A549 (cell line): ENCODE measurements at regions of chr17 and their contacts with region 1.

Region 1: GRCh38 chr17:4420692-4421131 is 13.0 kb upstream of the SPNS3 start:
- DNase-seq: peak; percentile 85 to 90
- ATAC-seq: peak; percentile 93 to 95
- H3K4me3 ChIP-seq: no peak overlapping the region
- H3K27ac ChIP-seq: no peak overlapping the region
- H3K4me1 ChIP-seq: no peaks in the 10 kb centered on the region
- CTCF ChIP-seq: peak; percentile 90
- EP300 ChIP-seq: no peak
- POLR2A ChIP-seq: no peak
- RAD21 ChIP-seq: peak; percentile 85 to 93

Region 2: GRCh38 chr17:4444782-4445473 is 24.2 kb after region 1 on chr17:
- CTCF ChIA-PET with region 1: interaction called, 126 read pairs
- POLR2A ChIA-PET with region 1: no interaction called
- DNase-seq: peak in 1 of 2 experiments; percentile 37
- ATAC-seq: peak; percentile 52 to 61; a peak in 3 of 6 replicates
- H3K4me3 ChIP-seq: no peak overlapping the region
- H3K27ac ChIP-seq: peak overlapping the region in 1 of 2 experiments; percentile 62; a peak in 2 of 6 replicates
- H3K4me1 ChIP-seq: peaks cover 6% of the 10 kb centered on the region
- CTCF ChIP-seq: no peak
- EP300 ChIP-seq: no peak
- POLR2A ChIP-seq: no peak
- RAD21 ChIP-seq: no peak

Region 3: DNA sequence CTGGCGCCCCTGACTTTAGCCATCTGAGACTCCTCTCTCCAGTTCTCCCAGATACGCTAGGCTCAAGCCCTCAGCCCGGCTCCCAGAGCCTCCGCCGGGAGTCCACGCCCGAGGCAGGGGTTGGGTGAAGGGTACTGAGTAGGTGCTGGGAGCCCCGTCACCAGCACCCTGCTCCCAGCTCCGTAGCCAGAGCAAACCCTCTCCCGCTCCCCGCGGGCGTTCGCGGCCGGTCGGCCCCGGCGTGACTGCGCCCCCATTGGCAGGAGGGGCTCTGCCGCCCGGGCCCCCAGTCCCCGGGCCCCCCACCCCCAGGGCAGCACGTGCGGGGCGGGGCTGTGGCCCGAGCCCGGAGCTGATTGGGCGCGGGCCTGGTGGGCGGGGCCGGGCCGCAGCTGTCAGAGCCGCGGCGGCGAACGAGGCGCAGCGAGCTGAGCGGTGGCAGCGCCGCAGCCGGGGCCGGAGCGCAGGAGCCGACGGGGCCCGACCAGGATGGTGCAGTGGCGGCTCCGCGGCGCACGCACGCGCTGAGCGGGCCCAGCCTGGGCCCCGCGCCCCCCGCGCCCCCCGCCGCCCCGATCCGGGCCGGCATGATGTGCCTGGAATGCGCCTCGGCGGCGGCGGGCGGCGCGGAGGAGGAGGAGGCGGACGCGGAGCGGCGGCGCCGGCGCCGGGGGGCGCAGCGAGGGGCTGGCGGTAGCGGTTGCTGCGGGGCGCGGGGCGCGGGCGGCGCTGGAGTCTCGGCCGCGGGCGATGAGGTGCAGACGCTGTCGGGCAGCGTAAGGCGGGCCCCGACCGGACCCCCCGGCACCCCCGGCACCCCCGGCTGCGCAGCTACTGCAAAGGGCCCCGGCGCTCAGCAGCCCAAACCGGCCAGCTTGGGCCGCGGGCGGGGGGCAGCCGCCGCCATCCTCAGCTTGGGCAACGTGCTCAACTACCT is 78.0 kb after region 1 on chr17 and contains the start of gene SPNS2:
- CTCF ChIA-PET with region 1: interaction called, 17 read pairs
- POLR2A ChIA-PET with region 1: no interaction called
- DNase-seq: peak; percentile 55 to 93
- ATAC-seq: peak; percentile 67 to 78
- H3K4me3 ChIP-seq: peak within 1 kb of the TSS; percentile 49
- H3K27ac ChIP-seq: peak within 1 kb of the TSS in 1 of 2 experiments; percentile 23; a peak in 2 of 6 replicates
- H3K4me1 ChIP-seq: peaks cover 25% of the 10 kb centered on the region
- CTCF ChIP-seq: no peak
- EP300 ChIP-seq: no peak
- POLR2A ChIP-seq: no peak
- RAD21 ChIP-seq: no peak
- polyA plus RNA-seq, gene SPNS2: 0.25 and 0.27 TPM in 2 replicates

Region 4: DNA sequence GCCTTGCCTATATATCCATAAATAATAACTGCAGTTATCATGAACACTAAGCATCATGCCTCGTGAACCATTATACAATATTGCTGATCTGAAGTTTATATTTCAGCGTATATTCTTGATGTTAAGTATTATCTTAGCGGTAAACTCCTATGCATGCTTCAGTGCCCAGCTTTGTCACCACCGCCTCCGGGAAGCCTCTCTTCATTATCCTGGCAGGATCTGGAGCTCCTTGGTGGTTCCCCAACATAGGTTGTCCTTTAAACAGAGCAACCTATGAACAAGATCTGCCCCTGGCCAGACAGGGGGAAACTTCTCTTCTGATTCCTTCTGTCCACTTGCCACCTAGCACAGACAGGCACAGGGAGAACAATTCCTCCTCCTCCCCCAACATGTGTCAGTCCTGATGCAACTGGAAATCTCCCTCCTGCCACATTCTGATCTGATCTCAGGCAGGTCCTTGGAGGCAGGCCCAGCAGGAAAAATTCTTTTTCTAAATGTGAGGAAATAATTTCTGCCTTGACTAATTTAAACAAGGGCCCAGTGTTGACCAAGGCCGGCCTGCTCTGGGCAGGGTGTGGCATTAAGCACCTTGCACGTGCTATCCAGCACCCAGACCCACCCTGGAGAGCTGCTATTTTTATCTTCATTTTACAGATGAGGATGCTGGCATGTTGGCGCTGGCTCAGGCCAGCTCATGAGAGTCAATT is 100.3 kb after region 1 on chr17:
- CTCF ChIA-PET with region 1: interaction called, 11 read pairs
- POLR2A ChIA-PET with region 1: no interaction called
- DNase-seq: peak in 1 of 2 experiments; percentile 52
- ATAC-seq: peak in 1 of 2 experiments; percentile 11; a peak in 2 of 6 replicates
- H3K4me3 ChIP-seq: no peak overlapping the region
- H3K27ac ChIP-seq: peak overlapping the region in 1 of 2 experiments; percentile 11; a peak in 2 of 6 replicates
- H3K4me1 ChIP-seq: peaks cover 15% of the 10 kb centered on the region; the same call in 2 of the 3 replicates
- CTCF ChIP-seq: no peak
- EP300 ChIP-seq: no peak
- POLR2A ChIP-seq: no peak
- RAD21 ChIP-seq: no peak

Region 5: GRCh38 chr17:4625181-4625617 is 204.5 kb after region 1 on chr17:
- CTCF ChIA-PET with region 1: interaction called, 33 read pairs
- POLR2A ChIA-PET with region 1: no interaction called
- DNase-seq: no peak
- ATAC-seq: peak in 1 of 2 experiments; percentile 47; a peak in 2 of 6 replicates
- H3K4me3 ChIP-seq: no peak overlapping the region
- H3K27ac ChIP-seq: no peak overlapping the region
- H3K4me1 ChIP-seq: no peaks in the 10 kb centered on the region
- CTCF ChIP-seq: no peak
- EP300 ChIP-seq: no peak
- POLR2A ChIP-seq: no peak
- RAD21 ChIP-seq: no peak